Activated CD4-positive, alpha-beta memory T cell treated with anti-CD3 and anti-CD28 coated beads for 36 hours (primary cell): ENCODE measurements at regions of chr2 and their contacts with region 1.

Region 1: GRCh38 chr2:177332041-177332991 is 60.3 kb upstream of the AGPS start:
- DNase-seq: peak; percentile 37
- H3K4me3 Mint-ChIP-seq: no peak overlapping the region
- H3K27ac Mint-ChIP-seq: no peak overlapping the region
- H3K4me1 Mint-ChIP-seq: peaks cover 5% of the 10 kb centered on the region
- H3K27me3 Mint-ChIP-seq: no peaks in the 10 kb centered on the region

Region 2: DNA sequence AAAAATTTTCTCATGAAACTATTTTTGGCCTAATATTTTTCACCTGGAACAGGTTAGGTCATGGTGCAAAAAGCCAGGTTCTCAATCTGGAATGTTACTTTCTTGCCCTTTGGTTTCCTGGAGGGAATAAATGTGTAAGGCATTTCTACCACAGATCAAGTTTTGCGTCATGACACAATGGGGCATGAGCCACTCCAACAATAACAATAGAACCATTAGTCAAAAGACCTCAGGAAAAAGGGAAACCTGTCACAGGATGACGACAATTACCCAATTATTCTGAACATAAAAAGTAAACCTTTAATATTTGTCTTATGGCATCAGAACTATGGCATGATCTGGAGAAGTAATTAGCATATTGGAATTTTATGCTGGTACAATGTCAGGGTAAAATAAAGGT is 207.9 kb before region 1 on chr2:
- CTCF ChIA-PET with region 1: no interaction called
- POLR2A ChIA-PET with region 1: no interaction called
- intact Hi-C with region 1: no loop called
- DNase-seq: no peak
- H3K4me3 Mint-ChIP-seq: no peak overlapping the region
- H3K27ac Mint-ChIP-seq: no peak overlapping the region
- H3K4me1 Mint-ChIP-seq: no peaks in the 10 kb centered on the region
- H3K27me3 Mint-ChIP-seq: peaks cover 2% of the 10 kb centered on the region

Region 3: DNA sequence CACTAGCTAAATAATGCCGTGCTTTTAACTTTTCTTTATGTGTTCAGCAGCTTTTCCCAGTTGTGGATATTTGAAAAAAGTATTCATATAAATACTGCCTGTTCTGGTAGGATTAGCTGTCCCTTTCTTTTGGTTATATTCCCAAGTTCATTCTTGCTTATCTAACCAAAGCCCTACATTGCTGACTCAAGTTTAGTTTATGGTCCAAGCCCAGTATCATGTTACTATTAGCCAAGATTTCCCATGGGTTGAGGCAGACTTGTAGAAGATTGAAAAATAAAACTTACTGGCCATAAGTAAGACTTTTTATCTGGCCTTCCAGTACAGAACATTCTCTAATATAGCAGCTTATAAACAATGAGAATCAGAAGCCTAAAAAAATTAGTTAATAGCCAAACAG is 18.1 kb before region 1 on chr2:
- CTCF ChIA-PET with region 1: interaction called, 5 read pairs
- POLR2A ChIA-PET with region 1: no interaction called
- intact Hi-C with region 1: loop called (anchors 2 kb)
- DNase-seq: no peak
- H3K4me3 Mint-ChIP-seq: no peak overlapping the region
- H3K27ac Mint-ChIP-seq: no peak overlapping the region
- H3K4me1 Mint-ChIP-seq: peaks cover 15% of the 10 kb centered on the region
- H3K27me3 Mint-ChIP-seq: no peaks in the 10 kb centered on the region

Region 4: GRCh38 chr2:177413703-177414102 is 81.4 kb after region 1 on chr2:
- CTCF ChIA-PET with region 1: interaction called, 129 read pairs
- POLR2A ChIA-PET with region 1: no interaction called
- intact Hi-C with region 1: loop called (anchors 1 kb)
- DNase-seq: no peak
- H3K4me3 Mint-ChIP-seq: no peak overlapping the region
- H3K27ac Mint-ChIP-seq: no peak overlapping the region
- H3K4me1 Mint-ChIP-seq: peaks cover 34% of the 10 kb centered on the region
- H3K27me3 Mint-ChIP-seq: no peaks in the 10 kb centered on the region

Region 5: GRCh38 chr2:177604271-177605065 is 272.2 kb after region 1 on chr2:
- CTCF ChIA-PET with region 1: interaction called, 22 read pairs
- POLR2A ChIA-PET with region 1: no interaction called
- intact Hi-C with region 1: loop called (anchors 1 kb)
- DNase-seq: no peak
- H3K4me3 Mint-ChIP-seq: no peak overlapping the region
- H3K27ac Mint-ChIP-seq: no peak overlapping the region
- H3K4me1 Mint-ChIP-seq: no peaks in the 10 kb centered on the region
- H3K27me3 Mint-ChIP-seq: peaks cover 8% of the 10 kb centered on the region

Region 6: GRCh38 chr2:177724398-177725287 is 392.3 kb after region 1 on chr2:
- CTCF ChIA-PET with region 1: interaction called, 52 read pairs
- POLR2A ChIA-PET with region 1: no interaction called
- intact Hi-C with region 1: loop called (anchors 1 kb)
- DNase-seq: peak; percentile 63
- H3K4me3 Mint-ChIP-seq: no peak overlapping the region
- H3K27ac Mint-ChIP-seq: no peak overlapping the region
- H3K4me1 Mint-ChIP-seq: no peaks in the 10 kb centered on the region
- H3K27me3 Mint-ChIP-seq: peaks cover 16% of the 10 kb centered on the region